ENCODE measurements at regions of chr20 and their contacts with region 1.

Region 1: GRCh38 chr20:37384683-37385174 is 38.8 kb downstream of the SRC start:
- DNase-seq: no peak
- H3K4me3 ChIP-seq: peak overlapping the region; percentile 12 to 63 (median 42)
- H3K27ac ChIP-seq: peak overlapping the region in 3 of 4 donors; percentile 15 to 63 (median 41)
- H3K4me1 ChIP-seq: peaks cover 3 to 37% (median 11%) of the 10 kb centered on the region in 3 donors
- H3K27me3 ChIP-seq: peaks cover 0 to 4% (median 0%) of the 10 kb centered on the region in 4 donors
- CTCF ChIP-seq: peak; percentile 72 to 94 (median 92)
- POLR2A ChIP-seq: no peak

Region 2: GRCh38 chr20:37192137-37192854 is 192.4 kb before region 1 on chr20:
- intact Hi-C with region 1: loop called (anchors 10 kb)
- DNase-seq: peak; percentile 16
- H3K4me3 ChIP-seq: no peak overlapping the region
- H3K27ac ChIP-seq: no peak overlapping the region
- H3K4me1 ChIP-seq: peaks cover 6 to 77% (median 10%) of the 10 kb centered on the region in 3 donors
- H3K27me3 ChIP-seq: no peaks in the 10 kb centered on the region
- CTCF ChIP-seq: peak; percentile 56 to 91 (median 90)
- POLR2A ChIP-seq: no peak

Region 3: DNA sequence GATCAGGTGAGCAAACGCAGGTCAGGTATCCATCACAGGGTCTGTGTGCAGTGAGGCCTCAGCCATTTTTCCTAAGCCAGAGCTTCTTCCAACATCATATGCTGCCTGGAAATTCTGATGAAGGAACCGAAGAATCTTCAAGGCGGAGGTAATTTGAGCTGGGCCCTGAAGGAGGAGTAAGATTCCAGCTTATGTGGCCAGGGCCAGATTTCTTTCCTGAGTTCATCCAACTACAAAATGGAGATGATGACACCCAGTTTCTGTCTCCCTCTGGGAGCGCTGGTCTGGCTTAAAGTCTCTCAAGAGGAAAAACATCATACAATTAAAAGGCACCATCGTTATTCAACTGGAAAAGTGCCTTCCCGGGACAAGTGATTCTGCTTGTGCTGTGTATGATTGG is 102.2 kb before region 1 on chr20:
- intact Hi-C with region 1: loop called (anchors 2 kb)
- DNase-seq: no peak
- H3K4me3 ChIP-seq: no peak overlapping the region
- H3K27ac ChIP-seq: peak overlapping the region in 2 of 4 donors; percentile 25 to 30
- H3K4me1 ChIP-seq: peaks cover 0 to 30% (median 0%) of the 10 kb centered on the region in 3 donors
- H3K27me3 ChIP-seq: peaks cover 0 to 7% (median 0%) of the 10 kb centered on the region in 4 donors
- CTCF ChIP-seq: peak in 4 of 6 experiments; percentile 28 to 51 (median 39)
- POLR2A ChIP-seq: no peak

Region 4: DNA sequence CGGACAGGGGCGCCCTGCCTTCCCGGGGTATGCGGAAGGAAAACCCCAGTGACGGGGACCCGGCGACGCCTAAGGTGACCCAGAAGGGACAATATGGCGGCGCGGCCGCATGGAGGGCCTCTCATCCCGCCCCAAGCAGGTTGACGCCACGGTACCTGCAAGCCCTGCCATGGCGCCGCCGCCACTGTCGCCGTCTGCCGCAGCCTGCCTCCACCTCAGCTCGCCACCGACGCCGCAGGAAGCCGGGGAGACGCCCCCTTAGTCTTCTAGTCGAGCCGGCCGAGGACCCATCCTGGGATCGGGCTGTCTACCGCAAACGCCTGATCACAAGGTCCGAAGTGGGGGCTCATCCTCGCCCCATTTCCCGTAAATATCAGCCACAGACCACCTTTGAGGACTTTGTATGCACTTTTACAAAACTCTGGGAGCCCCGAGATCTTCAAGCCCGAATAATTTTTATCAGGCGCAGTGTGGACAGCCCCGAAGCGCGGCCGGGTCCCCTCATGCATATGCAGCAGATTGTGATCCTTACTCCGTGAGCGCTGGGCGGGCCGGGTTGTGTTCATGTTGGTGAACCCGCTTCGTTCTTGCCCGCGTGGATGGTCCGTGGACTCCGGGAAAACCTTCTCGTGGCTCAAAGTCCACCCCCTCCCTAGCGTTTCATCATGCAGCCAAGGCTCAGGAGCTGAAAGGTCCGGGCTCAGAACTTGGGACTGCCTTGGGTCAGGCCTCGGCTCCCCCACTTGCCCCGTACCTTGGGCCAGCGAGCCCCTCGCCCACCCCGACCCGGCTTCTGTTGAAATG is 143.1 kb after region 1 on chr20 and contains the start of gene BLCAP:
- intact Hi-C with region 1: loop called (anchors 10 kb)
- DNase-seq: peak; percentile 67
- H3K4me3 ChIP-seq: peak within 1 kb of the TSS; percentile 51 to 99 (median 96)
- H3K27ac ChIP-seq: peak within 1 kb of the TSS; percentile 90 to 98 (median 96)
- H3K4me1 ChIP-seq: peaks cover 29 to 50% (median 37%) of the 10 kb centered on the region in 3 donors
- H3K27me3 ChIP-seq: no peaks in the 10 kb centered on the region
- CTCF ChIP-seq: peak in 2 of 6 experiments; percentile 4 to 6
- POLR2A ChIP-seq: peak in 3 of 4 donors; percentile 68 to 93 (median 90)
- total RNA-seq, gene BLCAP: 66.4 to 104 (median 78.1) TPM

Measured in esophagus squamous epithelium (tissue), 5 donors.